ENCODE measurements at regions of chr18 and their contacts with region 1.

Region 1: DNA sequence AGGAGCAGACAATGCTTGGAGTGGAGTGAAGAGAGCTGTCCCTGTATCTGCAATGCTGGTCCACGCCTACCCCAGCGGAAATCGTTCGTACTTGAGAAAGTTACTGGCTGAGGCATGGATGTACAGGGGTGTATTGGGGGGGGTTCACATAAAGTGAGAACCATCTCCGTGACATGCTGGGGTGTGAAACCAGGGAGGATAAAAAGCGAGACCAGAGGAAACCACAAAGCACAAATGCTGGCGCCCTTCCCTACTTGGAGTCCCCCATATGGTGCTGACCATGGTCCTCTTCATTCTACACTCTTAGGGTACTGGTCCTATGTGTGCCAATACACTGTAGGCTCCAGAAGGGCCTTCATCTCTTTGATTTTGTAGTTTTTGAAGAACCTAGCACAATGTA is 244.1 kb downstream of the L3MBTL4 start:
- DNase-seq: no peak
- ATAC-seq: no peak
- H3K4me3 ChIP-seq: no peak overlapping the region
- H3K27ac ChIP-seq: no peak overlapping the region
- H3K4me1 ChIP-seq: no peaks in the 10 kb centered on the region
- H3K27me3 ChIP-seq: no peaks in the 10 kb centered on the region
- CTCF ChIP-seq: no peak
- EP300 ChIP-seq: no peak
- POLR2A ChIP-seq: no peak
- RAD21 ChIP-seq: no peak

Region 2: DNA sequence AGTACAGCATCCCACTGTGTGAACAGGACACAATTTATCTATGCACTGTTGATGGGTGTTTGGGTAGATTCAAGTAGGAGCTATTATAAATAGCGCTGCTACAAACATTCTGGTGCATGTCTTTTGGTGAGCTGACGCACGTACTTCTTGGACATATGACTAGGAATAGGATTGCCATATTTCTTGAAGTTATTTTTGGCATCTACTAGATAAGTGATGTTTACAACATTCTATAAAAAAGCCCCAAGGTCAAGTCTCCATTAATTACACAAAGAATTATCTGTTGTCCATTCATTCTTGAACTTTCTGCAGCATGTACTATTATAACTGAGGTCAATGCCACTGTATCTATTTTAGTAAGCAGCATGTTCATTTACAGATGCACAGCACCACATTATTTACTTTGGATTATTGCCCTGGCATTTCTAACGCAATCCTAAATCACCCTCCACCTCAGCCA is 49.8 kb before region 1 on chr18:
- CTCF ChIA-PET with region 1: no interaction called
- POLR2A ChIA-PET with region 1: no interaction called
- RAD21 ChIA-PET with region 1: no interaction called
- SMC1A ChIA-PET with region 1: no interaction called
- in situ Hi-C with region 1: no loop called
- intact Hi-C with region 1: no loop called
- DNase-seq: no peak
- ATAC-seq: no peak
- H3K4me3 ChIP-seq: no peak overlapping the region
- H3K27ac ChIP-seq: no peak overlapping the region
- H3K4me1 ChIP-seq: no peaks in the 10 kb centered on the region; the same call in 1 of the 2 replicates
- H3K27me3 ChIP-seq: no peaks in the 10 kb centered on the region
- CTCF ChIP-seq: no peak
- EP300 ChIP-seq: no peak
- POLR2A ChIP-seq: no peak
- RAD21 ChIP-seq: no peak

Region 3: DNA sequence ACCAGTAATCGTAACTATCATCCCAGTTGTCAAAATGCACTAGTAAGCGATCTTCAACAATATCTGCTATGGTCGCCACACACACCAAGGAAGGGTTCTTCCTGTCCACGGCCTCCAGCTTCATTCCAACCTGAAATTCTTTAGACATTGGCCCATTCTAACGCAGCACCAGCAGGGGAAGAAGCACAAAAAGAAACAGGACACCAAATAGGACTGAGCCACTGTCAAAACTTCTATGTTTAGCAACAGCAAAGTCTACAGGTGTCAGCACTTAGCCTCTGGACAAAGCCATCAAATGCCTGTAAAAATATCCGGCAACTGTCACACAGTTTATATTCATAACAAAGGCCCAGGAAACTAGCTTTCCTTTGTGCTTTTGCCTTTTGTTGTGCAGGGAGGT is 69.1 kb after region 1 on chr18:
- CTCF ChIA-PET with region 1: no interaction called
- POLR2A ChIA-PET with region 1: no interaction called
- RAD21 ChIA-PET with region 1: no interaction called
- SMC1A ChIA-PET with region 1: no interaction called
- in situ Hi-C with region 1: no loop called
- intact Hi-C with region 1: loop called (anchors 10 kb)
- DNase-seq: no peak
- ATAC-seq: no peak
- H3K4me3 ChIP-seq: no peak overlapping the region
- H3K27ac ChIP-seq: no peak overlapping the region
- H3K4me1 ChIP-seq: no peaks in the 10 kb centered on the region
- H3K27me3 ChIP-seq: no peaks in the 10 kb centered on the region
- CTCF ChIP-seq: no peak
- EP300 ChIP-seq: no peak
- POLR2A ChIP-seq: no peak
- RAD21 ChIP-seq: no peak

Measured in GM12878 (cell line).